ENCODE measurements at regions of chr3 and their contacts with region 1.

Region 1: GRCh38 chr3:192816351-192816750 is 89.0 kb upstream of the FGF12 start:
- DNase-seq: no peak

Region 2: GRCh38 chr3:192917404-192918274 is 101.3 kb after region 1 on chr3 and contains the start of gene MB21D2:
- intact Hi-C with region 1: loop called (anchors 5 kb)
- DNase-seq: peak; percentile 87
- total RNA-seq, gene MB21D2: 3.2 TPM

Region 3: GRCh38 chr3:193040836-193041672 is 224.7 kb after region 1 on chr3:
- intact Hi-C with region 1: loop called (anchors 2 kb)
- DNase-seq: no peak

Region 4: DNA sequence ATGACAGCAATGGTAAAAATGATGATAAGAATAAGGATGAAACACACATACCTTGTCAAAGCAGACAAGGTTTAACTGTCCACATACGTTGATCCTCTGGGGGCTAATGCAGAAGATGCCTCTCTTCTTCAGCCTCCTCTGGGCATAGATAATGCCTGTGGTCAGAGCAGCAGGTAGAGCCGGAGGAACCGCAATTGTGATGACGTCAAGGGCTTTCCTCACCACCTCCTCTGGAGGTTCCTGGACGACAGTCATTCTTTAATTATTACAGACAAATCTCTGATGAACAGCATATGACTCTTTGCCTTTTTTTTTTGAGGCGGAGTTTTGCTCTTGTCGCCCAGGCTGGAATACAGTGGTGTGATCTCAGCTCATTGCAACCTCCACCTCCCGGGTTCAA is 648.5 kb after region 1 on chr3:
- intact Hi-C with region 1: loop called (anchors 5 kb)
- DNase-seq: no peak

Measured in cardiac septum (tissue), 1 donor.